ENCODE measurements at regions of chr3 and their contacts with region 1.

Region 1: GRCh38 chr3:130276203-130276803 is 69.2 kb upstream of the COL6A5 start:
- DNase-seq: peak; percentile 57
- CTCF ChIP-seq: peak; percentile 61

Region 2: DNA sequence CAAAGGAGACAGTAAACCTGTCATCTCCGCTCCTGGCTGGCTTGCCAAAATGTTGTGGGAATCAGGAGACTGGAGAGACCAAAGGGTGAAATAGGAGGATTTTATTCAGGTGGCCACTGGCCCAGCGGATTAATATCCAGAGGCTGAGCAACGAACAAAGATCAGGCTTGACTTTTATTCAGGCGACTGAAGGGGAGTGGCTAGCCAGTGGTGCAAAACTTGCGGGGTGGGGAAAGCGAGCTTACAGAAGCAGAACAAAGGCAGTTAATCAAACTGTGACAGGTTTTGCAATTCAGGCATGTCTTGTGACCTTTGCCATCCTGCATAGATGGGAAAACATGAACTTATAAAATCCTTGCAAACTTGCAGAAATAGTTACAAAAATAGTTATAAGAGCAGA is 1416.7 kb before region 1 on chr3:
- CTCF ChIA-PET with region 1: no interaction called
- POLR2A ChIA-PET with region 1: no interaction called
- DNase-seq: no peak
- CTCF ChIP-seq: no peak

Region 3: DNA sequence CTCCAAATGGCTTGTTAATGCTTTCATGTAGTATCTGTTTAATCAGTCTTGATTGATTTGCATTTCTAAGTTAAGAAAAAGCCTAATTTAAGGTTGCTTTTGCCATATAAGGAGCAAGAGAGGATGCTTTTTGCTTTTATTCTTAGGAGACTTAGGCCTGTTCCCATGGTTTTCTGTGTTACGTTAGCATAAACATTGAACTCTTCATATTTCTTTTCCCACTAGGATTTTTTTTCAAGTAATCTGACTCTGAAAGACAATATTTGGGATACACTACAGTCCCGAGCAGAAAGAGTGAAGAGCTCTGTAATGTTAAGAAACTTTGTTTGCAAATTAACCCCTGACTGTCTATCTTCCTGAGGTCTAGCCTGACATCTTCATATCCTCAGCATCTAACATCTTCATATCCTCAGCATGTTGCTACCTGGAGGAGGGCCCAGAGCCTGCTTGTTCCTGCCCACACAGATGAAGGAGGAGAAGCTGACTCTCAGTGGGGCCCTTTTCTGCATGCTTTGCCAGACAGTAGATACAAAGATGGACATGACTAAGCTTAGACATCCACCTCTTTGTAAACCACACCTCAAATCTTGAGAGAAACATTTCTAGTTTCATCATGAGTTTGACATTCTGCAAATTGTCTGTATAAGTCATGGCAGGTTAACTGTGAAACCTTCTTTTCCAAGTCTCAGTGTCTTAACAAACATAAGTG is 17.0 kb before region 1 on chr3:
- CTCF ChIA-PET with region 1: interaction called, 14 read pairs
- POLR2A ChIA-PET with region 1: no interaction called
- DNase-seq: no peak
- CTCF ChIP-seq: no peak

Region 4: GRCh38 chr3:130539005-130539404 is 262.7 kb after region 1 on chr3:
- CTCF ChIA-PET with region 1: interaction called, 16 read pairs
- POLR2A ChIA-PET with region 1: no interaction called
- DNase-seq: peak; percentile 32
- CTCF ChIP-seq: peak; percentile 42